Endothelial cell of umbilical vein (primary cell): ENCODE measurements at regions of chr17 and their contacts with region 1.

Region 1: GRCh38 chr17:78140169-78140976 is 5.8 kb upstream of the C17orf99 start:
- DNase-seq: peak; percentile 84
- H3K4me3 ChIP-seq: peak overlapping the region in 1 of 3 experiments; percentile 1
- H3K27ac ChIP-seq: no peak overlapping the region
- H3K4me1 ChIP-seq: peaks cover 22% of the 10 kb centered on the region
- H3K27me3 ChIP-seq: no peaks in the 10 kb centered on the region
- CTCF ChIP-seq: no peak
- POLR2A ChIP-seq: peak; percentile 51

Region 2: GRCh38 chr17:78063489-78063888 is 76.9 kb before region 1 on chr17:
- CTCF ChIA-PET with region 1: no interaction called
- POLR2A ChIA-PET with region 1: no interaction called
- dilution Hi-C with region 1: no loop called
- intact Hi-C with region 1: no loop called
- DNase-seq: no peak
- H3K4me3 ChIP-seq: no peak overlapping the region
- H3K27ac ChIP-seq: no peak overlapping the region
- H3K4me1 ChIP-seq: peaks cover 11% of the 10 kb centered on the region
- H3K27me3 ChIP-seq: no peaks in the 10 kb centered on the region
- CTCF ChIP-seq: no peak
- POLR2A ChIP-seq: no peak

Region 3: GRCh38 chr17:78151514-78152008 is 11.2 kb after region 1 on chr17:
- CTCF ChIA-PET with region 1: interaction called, 4 read pairs
- POLR2A ChIA-PET with region 1: interaction called, 3 read pairs
- dilution Hi-C with region 1: no loop called
- intact Hi-C with region 1: loop called (anchors 1 kb)
- DNase-seq: no peak
- H3K4me3 ChIP-seq: no peak overlapping the region
- H3K27ac ChIP-seq: no peak overlapping the region
- H3K4me1 ChIP-seq: peaks cover 6% of the 10 kb centered on the region
- H3K27me3 ChIP-seq: no peaks in the 10 kb centered on the region
- CTCF ChIP-seq: no peak
- POLR2A ChIP-seq: no peak

Region 4: GRCh38 chr17:78168242-78168902 is 28.0 kb after region 1 on chr17 and contains the start of gene SYNGR2:
- CTCF ChIA-PET with region 1: interaction called, 5 read pairs
- POLR2A ChIA-PET with region 1: no interaction called
- dilution Hi-C with region 1: no loop called
- intact Hi-C with region 1: loop called (anchors 2 kb)
- DNase-seq: peak; percentile 57
- H3K4me3 ChIP-seq: peak within 1 kb of the TSS; percentile 24 to 74 (median 74)
- H3K27ac ChIP-seq: no peak within 1 kb of the TSS
- H3K4me1 ChIP-seq: peaks cover 2% of the 10 kb centered on the region
- H3K27me3 ChIP-seq: no peaks in the 10 kb centered on the region
- CTCF ChIP-seq: no peak
- POLR2A ChIP-seq: peak; percentile 68
- total RNA-seq, gene SYNGR2: 58.6 and 65.9 TPM in 2 replicates

Region 5: GRCh38 chr17:79242873-79243602 is 1102.7 kb after region 1 on chr17:
- CTCF ChIA-PET with region 1: no interaction called
- POLR2A ChIA-PET with region 1: no interaction called
- dilution Hi-C with region 1: no loop called
- intact Hi-C with region 1: no loop called
- DNase-seq: no peak
- H3K4me3 ChIP-seq: no peak overlapping the region
- H3K27ac ChIP-seq: no peak overlapping the region
- H3K4me1 ChIP-seq: no peaks in the 10 kb centered on the region
- H3K27me3 ChIP-seq: no peaks in the 10 kb centered on the region
- CTCF ChIP-seq: no peak
- POLR2A ChIP-seq: no peak